ENCODE measurements at regions of chr3 and their contacts with region 1.

Region 1: DNA sequence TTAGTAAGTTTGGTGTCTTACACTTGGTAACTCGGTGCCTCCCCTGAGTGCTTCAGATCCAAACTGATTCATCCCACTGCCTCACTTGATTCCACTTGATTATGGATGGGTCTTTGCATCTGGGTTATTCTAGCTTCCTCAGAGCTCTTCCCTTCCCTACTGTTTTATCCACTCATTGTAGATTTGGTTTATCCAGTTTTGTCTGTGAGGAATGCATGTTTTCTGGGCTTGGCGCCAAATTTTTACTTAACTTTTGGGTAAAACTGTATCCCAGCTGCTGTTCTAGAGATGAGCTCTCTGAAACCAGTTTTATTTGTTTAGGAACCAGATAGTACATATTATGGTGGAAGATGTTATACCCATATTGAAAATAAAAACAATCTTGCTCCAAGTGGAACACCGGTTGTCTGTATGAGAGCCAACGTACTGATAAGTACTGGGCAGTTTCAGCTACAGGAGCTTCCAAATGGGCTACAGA is 20.9 kb downstream of the RAD54L2 start:
- DNase-seq: no peak
- H3K4me3 ChIP-seq: no peak overlapping the region
- H3K27ac ChIP-seq: no peak overlapping the region
- H3K4me1 ChIP-seq: no peaks in the 10 kb centered on the region
- H3K27me3 ChIP-seq: no peaks in the 10 kb centered on the region
- CTCF ChIP-seq: no peak

Region 2: DNA sequence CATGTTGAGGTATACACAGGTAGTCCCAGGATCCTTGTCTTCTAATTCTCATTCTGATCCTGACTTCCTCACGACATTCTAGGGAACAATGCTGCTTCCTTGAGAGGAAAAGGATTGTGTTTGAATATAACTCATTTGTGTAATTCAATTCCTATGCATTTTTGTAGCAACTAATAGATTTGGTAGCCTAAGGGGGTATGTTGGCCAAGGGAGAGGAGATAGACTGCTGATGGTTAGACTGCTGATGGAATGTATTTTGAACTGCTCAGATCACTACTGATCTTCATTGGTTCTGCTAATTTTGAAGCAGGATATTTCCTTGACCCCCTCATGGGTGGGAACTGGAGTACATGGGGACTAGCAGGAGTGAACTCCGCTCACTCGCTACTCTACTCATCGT is 18.8 kb after region 1 on chr3:
- CTCF ChIA-PET with region 1: no interaction called
- POLR2A ChIA-PET with region 1: interaction called, 13 read pairs
- intact Hi-C with region 1: no loop called
- DNase-seq: no peak
- H3K4me3 ChIP-seq: no peak overlapping the region
- H3K27ac ChIP-seq: no peak overlapping the region
- H3K4me1 ChIP-seq: no peaks in the 10 kb centered on the region
- H3K27me3 ChIP-seq: no peaks in the 10 kb centered on the region
- CTCF ChIP-seq: no peak

Region 3: DNA sequence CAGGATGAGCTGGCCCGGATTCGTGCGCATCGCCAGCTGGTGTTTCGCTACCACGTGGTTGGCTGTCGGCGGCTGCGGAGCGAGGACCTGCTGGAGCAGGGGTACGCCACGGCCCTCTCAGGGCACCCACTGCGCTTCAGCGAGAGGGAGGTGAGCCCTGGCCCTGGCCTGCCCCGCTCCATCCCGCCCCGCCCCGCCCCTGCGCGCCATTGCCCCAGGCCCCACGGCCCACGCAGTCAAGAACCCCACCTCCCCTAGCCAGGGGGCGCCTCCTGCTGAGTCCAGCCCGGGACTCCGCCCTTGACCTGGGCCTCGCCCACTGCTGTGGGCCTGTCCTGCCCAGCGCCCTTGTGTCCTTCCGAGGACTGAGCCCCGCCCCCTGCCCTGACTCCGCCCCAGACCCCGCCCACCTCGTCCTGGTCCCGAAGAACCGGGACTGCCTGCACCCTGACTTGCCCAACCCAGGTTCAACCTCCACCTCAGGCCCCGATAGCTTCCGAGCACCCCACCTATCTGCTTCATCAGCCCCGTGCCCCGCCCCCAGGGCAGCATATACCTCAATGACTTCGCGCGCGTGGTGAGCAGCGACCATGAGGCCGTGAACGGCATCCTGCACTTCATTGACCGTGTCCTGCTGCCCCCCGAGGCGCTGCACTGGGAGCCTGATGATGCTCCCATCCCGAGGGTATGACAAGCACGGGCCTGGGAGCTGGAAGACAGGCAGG is 959.4 kb after region 1 on chr3:
- CTCF ChIA-PET with region 1: no interaction called
- POLR2A ChIA-PET with region 1: no interaction called
- intact Hi-C with region 1: no loop called
- DNase-seq: no peak
- H3K4me3 ChIP-seq: no peak overlapping the region
- H3K27ac ChIP-seq: no peak overlapping the region
- H3K4me1 ChIP-seq: no peaks in the 10 kb centered on the region
- H3K27me3 ChIP-seq: no peaks in the 10 kb centered on the region
- CTCF ChIP-seq: no peak

Measured in PC-9 (cell line).